Right lobe of liver (tissue), 6 donors: ENCODE measurements at regions of chr17 and their contacts with region 1.

Region 1: DNA sequence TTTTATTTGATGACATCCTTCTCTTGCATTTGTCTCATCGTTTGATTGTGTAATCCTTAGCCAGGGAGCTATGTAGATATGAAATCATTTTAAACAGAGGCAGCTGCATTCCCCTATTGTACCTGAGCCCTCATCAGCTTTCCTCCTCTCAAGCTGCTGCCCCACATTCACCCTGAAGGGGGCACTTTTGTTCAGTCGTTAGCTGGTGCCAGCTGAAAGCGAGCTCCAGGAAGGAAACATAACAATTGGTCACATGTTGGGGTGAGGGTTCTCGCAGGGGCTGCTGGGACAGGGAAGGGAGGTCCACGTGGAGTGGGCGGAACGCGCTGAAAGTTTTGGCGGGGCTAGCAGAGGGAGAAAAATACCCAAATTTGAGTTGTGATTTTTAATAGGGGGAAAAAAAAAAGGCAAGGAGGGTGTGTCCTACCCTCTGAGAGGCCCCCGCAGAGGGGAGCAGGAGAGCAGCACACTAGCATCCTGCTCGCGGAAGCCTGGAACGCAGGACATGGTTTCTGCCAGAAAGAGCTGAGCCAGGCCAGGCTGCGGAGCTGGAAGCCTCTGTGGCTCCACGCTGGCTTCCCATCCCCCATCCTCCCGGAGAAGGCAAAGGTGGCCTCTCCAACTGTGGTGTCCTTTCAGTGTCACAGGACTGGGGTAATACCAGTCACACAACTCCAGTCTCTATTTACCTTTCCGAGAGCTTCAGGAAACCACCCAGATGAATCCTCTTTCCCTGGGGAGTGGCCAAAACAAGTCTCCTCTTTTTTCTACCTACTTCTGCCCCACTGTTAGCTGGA is 8.5 kb upstream of the MSL1 start:
- DNase-seq: peak; percentile 90 to 95 (median 94)
- ATAC-seq: peak; percentile 63 to 75 (median 72)
- H3K4me3 ChIP-seq: peak overlapping the region; percentile 46 to 52 (median 48)
- H3K27ac ChIP-seq: peak overlapping the region; percentile 90 to 91 (median 90)
- H3K4me1 ChIP-seq: peaks cover 2 to 64% (median 41%) of the 10 kb centered on the region in 4 donors
- H3K27me3 ChIP-seq: no peaks in the 10 kb centered on the region
- CTCF ChIP-seq: peak; percentile 87 to 95 (median 93)
- POLR2A ChIP-seq: peak; percentile 52

Region 2: DNA sequence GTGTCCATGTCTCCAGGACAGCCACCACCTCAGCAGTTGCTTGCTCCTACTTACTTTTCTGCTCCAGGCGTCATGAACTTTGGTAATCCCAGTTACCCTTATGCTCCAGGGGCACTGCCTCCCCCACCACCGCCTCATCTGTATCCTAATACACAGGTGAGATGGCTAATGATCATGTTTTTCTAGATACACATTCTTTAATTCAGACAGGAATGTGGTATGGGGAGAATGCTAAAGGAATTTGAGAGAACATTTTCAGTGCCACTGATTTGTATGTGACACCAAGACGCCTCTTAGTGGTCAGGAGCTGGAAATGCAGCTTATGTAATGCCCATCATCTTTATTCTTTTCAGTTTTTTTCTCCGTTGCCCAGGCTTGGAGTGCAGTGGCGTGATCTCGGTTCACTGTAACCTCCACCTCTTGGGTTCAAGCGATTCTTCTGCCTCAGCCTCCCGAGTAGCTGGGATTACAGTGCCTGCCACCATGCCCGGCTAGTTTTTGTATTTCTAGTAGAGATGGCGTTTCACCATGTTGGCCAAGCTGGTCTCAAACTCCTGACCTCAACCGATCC is 55.0 kb after region 1 on chr17:
- intact Hi-C with region 1: loop called in 1 of 2 experiments (anchors 10 kb)
- DNase-seq: no peak
- ATAC-seq: peak; percentile 81 to 91 (median 86)
- H3K4me3 ChIP-seq: no peak overlapping the region
- H3K27ac ChIP-seq: peak overlapping the region in 2 of 3 donors; percentile 25 to 33
- H3K4me1 ChIP-seq: peaks cover 0 to 10% (median 5%) of the 10 kb centered on the region in 4 donors
- H3K27me3 ChIP-seq: no peaks in the 10 kb centered on the region
- CTCF ChIP-seq: peak; percentile 75 to 94 (median 78)
- POLR2A ChIP-seq: no peak